Dendritic cell treated with granulocyte-macrophage colony-stimulating factor and Interleukin-4, amounts not matched to agents 40 ng/mL and 50 ng/mL, for 4 days (primary cell): ENCODE measurements at regions of chr3 and their contacts with region 1.

Region 1: GRCh38 chr3:196739671-196740480 is at the start of gene PAK2:
- H3K4me3 Mint-ChIP-seq: peak within 1 kb of the TSS; percentile 100
- H3K27ac Mint-ChIP-seq: peak within 1 kb of the TSS; percentile 99
- H3K4me1 Mint-ChIP-seq: peaks cover 18% of the 10 kb centered on the region
- H3K27me3 Mint-ChIP-seq: no peaks in the 10 kb centered on the region

Region 2: DNA sequence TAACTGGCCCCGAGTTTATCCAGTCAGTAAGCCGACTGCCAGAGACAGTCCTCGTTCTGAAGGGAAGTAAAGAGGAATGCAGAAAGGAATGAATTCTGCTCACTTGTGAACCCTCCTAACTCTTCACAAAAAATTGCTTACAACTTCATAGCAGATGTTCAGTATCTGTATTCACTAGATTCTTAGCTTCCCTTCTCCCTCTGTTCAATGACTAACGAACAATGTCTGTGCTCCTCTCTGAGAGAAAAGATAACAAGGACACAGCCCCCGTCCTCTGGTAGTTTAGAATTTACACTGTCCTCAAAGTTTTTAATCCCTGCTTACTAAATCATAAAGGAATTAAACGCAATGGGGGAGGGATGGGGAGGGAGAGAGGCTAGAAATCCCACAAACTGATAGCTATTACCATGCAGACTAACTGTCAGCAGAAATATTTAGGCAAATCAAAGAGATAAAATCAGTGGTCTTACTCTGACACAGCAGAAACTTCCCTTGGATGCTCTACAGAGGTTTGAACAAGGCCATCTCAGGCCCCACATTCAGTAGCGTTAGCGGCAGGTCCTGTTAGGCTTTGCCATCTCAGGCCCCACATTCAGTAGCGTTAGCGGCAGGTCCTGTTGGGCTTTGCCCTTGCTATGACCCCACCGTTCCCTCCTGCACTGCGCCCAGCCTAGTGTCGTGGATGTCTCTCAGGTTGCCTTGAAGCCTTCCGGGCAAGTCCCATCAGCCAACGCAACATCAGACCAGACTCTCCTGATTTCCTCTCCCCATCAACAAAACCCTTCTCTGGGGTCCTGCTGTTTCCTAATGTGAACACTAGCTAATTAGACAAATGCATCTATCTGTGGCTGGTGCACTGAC is 76.9 kb before region 1 on chr3:
- intact Hi-C with region 1: no loop called
- H3K4me3 Mint-ChIP-seq: no peak overlapping the region
- H3K27ac Mint-ChIP-seq: no peak overlapping the region
- H3K4me1 Mint-ChIP-seq: peaks cover 63% of the 10 kb centered on the region
- H3K27me3 Mint-ChIP-seq: no peaks in the 10 kb centered on the region

Region 3: DNA sequence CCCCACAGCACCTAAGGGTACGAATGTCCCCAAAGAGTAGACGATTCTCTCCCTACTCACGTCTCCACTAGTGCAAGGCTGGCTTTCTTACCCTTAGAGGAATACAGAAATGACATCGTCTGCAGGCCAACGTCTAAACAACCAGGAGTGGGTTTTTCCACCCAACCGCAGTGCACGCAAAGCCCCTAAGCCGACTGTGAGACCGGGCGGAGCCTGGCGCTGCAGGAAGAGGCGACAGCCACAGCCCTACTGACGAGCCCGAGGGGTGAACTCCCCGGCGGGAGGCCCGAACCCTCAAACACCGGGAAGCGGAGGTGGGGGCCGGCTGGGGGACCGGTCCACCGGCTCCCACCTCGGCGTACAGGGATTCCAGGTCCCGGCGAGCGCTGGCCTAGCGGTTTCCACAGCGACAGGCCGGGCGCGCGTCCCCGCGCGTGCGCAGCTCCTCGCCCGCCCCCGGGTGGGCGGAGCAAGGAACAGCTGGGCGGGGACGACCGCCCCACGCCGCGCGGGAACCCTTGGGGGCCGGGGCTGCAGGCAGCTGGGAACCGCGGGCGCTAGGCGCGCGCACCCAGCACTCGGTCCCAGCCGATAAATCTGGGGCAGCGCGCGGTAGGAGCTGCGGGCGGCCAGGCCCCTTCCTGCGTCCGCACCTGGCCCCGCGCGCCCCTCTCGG is 27.9 kb before region 1 on chr3 and contains the starts of genes CEP19 and PIGX:
- intact Hi-C with region 1: loop called (anchors 1 kb)
- H3K4me3 Mint-ChIP-seq: peak within 1 kb of the TSS; percentile 84
- H3K27ac Mint-ChIP-seq: peak within 1 kb of the TSS; percentile 83
- H3K4me1 Mint-ChIP-seq: peaks cover 28% of the 10 kb centered on the region
- H3K27me3 Mint-ChIP-seq: no peaks in the 10 kb centered on the region

Region 4: DNA sequence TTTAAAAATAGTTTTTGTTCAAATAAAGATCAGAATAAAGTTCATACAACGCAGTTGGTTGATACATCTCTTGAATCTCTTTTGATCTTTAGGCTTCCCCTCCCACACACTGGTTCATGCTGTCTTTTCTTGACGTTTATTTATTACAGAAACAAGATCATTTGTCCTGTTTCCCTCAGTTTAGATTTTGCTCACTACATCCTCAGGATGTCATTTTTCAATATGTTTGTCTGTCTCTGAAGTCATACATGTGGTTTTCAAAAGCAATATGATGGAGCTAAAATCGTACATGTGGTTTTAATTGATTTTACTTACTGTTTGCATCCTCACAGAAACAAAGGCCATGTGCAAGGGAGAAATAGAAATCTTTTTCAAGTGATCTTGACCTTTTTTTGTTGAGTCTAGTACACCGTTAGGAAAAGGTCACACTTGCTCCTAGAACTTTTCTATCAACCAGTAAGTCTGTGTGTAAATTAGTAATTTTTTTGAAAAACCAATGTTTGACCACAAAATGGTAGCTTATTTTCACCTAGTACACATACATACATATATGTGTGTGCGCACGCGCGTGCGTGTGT is 64.1 kb after region 1 on chr3:
- intact Hi-C with region 1: loop called (anchors 10 kb)
- H3K4me3 Mint-ChIP-seq: no peak overlapping the region
- H3K27ac Mint-ChIP-seq: no peak overlapping the region
- H3K4me1 Mint-ChIP-seq: peaks cover 5% of the 10 kb centered on the region
- H3K27me3 Mint-ChIP-seq: no peaks in the 10 kb centered on the region